Activated T-helper 1 cell treated with anti-CD3 and anti-CD28 coated beads, Interleukin-12 subunit alpha, Interleukin-12 subunit beta, Interleukin-2, Interleukin-4 antibody, amounts not matched to agents 30 ng/mL and 10 ng/mL and 1 ng/mL, durations not matched to agents 14 hours and 24 hours and 36 hours (primary cell): ENCODE measurements at regions of chr19 and their contacts with region 1.

Region 1: DNA sequence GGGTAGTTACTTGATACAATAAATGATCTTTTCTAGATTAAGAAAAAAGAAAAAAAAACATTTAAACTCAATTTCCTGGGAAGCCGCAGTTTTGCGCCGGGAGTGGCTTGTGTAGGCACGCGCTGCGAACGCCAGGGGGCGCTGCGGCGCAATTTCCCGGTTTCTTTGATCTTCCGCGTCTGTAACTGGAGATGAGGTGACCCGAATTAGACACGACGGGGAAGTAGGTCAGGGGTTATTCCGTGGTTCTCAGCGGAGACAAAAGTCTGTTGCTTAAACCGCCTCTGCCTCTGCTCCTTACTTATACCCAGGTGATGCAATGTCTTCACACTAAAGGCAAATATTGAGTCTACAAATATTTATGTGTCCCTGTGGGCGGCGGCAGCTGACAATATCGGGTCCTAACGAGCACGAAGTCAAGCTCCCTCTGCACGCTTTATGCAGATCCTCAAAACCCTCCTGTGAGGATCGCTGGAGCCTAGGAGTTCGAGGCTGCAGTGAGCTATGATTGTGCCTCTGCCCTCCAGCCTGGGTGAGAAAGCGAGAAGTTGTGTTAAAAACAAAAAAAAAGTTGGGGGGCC is 15.2 kb downstream of the STXBP2 start:
- DNase-seq: peak; percentile 81
- H3K4me3 Mint-ChIP-seq: peak overlapping the region; percentile 70
- H3K27ac Mint-ChIP-seq: peak overlapping the region; percentile 52
- H3K4me1 Mint-ChIP-seq: peaks cover 13% of the 10 kb centered on the region
- H3K27me3 Mint-ChIP-seq: peaks cover 7% of the 10 kb centered on the region

Region 2: GRCh38 chr19:7629347-7630054 is 22.6 kb before region 1 on chr19 and contains the starts of genes PET100 and XAB2:
- intact Hi-C with region 1: loop called (anchors 2 kb)
- DNase-seq: peak; percentile 93
- H3K4me3 Mint-ChIP-seq: peak within 1 kb of the TSS; percentile 98
- H3K27ac Mint-ChIP-seq: peak within 1 kb of the TSS; percentile 98
- H3K4me1 Mint-ChIP-seq: peaks cover 31% of the 10 kb centered on the region
- H3K27me3 Mint-ChIP-seq: no peaks in the 10 kb centered on the region
- total RNA-seq, gene PET100: 88.5 and 93.4 TPM in 2 replicates
- total RNA-seq, gene XAB2: 50.7 and 51.2 TPM in 2 replicates

Region 3: GRCh38 chr19:7636691-7637373 is 15.3 kb before region 1 on chr19 and contains the start of gene STXBP2:
- intact Hi-C with region 1: loop called (anchors 1 kb)
- DNase-seq: peak; percentile 85
- H3K4me3 Mint-ChIP-seq: peak within 1 kb of the TSS; percentile 85
- H3K27ac Mint-ChIP-seq: peak within 1 kb of the TSS; percentile 77
- H3K4me1 Mint-ChIP-seq: peaks cover 35% of the 10 kb centered on the region
- H3K27me3 Mint-ChIP-seq: no peaks in the 10 kb centered on the region
- total RNA-seq, gene STXBP2: 101 and 102 TPM in 2 replicates

Region 4: DNA sequence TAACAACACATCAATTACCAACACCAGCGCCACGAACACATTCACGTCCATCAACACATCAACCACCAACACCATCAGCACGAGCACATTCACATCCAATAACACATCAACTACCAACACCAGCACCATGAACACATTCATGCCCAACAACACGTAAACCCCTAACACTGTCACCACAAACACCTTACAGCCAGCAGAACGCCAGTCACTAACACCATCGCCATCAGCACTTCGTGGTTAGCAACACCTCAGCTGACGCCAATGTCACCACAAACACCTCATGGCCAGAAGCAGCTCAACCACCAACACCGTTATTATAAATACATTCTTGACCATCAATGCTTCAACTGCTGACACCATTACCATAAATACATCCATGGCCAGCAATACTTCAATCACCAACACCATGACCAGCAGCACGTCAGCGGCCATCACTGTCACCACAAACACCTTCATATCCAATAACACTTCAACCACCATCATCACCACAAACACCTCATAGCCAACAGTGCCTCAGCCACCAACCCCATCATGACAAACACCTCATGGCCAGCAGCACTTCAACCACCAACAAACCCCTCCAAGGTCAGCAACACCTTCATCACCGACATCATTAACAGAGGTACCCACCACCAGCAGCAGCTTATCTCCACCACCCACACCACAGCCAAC is 40.4 kb after region 1 on chr19:
- intact Hi-C with region 1: no loop called
- DNase-seq: no peak
- H3K4me3 Mint-ChIP-seq: no peak overlapping the region
- H3K27ac Mint-ChIP-seq: no peak overlapping the region
- H3K4me1 Mint-ChIP-seq: no peaks in the 10 kb centered on the region
- H3K27me3 Mint-ChIP-seq: peaks cover 8% of the 10 kb centered on the region

Region 5: GRCh38 chr19:7799640-7800355 is 147.6 kb after region 1 on chr19:
- intact Hi-C with region 1: loop called (anchors 1 kb)
- DNase-seq: peak; percentile 37
- H3K4me3 Mint-ChIP-seq: no peak overlapping the region
- H3K27ac Mint-ChIP-seq: no peak overlapping the region
- H3K4me1 Mint-ChIP-seq: peaks cover 11% of the 10 kb centered on the region
- H3K27me3 Mint-ChIP-seq: peaks cover 36% of the 10 kb centered on the region